ENCODE measurements at regions of chr16 and their contacts with region 1.

Region 1: DNA sequence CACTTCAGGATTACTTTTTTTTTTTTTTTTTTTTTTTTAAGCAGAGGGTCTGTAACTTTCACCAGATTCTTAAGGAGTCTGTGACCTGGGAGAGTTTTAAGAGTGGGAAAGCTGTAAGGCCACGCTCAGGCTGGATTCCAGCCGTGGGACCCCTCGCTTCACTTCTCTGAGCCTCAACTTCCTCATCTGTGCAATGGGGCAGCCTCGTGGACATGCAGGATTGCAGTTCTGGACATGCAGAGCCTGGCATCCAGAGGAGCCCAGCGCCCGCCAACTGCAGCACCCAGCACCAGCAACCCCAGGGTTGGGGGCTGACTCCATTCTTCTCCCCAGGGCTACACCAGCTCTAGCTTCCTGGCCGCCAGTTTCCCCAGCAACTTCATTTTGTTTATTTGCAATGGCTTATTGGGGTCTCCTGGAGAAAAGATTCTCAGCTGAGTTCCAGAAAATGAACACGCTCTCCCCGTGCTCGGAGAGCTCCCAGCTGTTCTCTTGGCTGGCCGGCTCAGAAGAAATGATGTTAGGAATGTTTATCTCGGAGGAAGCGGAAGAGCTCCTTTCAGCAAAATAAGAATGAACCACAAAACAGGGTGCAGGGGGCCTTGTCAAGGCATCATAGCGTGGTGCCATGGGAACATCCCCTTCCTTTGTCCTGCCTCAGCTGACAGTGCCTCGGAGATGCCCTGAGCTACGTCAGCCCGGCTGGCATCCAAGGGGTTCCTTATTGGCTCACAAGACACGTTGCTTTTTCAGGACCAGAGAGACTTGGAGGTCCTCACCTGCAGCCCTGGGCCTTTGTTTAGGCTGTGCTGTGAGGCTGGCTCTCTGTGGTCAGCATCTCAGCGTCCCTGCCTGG is 22.9 kb upstream of the ZCCHC14 start:
- DNase-seq: no peak
- H3K4me3 Mint-ChIP-seq: no peak overlapping the region
- H3K27ac Mint-ChIP-seq: no peak overlapping the region
- H3K4me1 Mint-ChIP-seq: peaks cover 28% of the 10 kb centered on the region
- H3K27me3 Mint-ChIP-seq: no peaks in the 10 kb centered on the region
- CTCF ChIP-seq: no peak

Region 2: DNA sequence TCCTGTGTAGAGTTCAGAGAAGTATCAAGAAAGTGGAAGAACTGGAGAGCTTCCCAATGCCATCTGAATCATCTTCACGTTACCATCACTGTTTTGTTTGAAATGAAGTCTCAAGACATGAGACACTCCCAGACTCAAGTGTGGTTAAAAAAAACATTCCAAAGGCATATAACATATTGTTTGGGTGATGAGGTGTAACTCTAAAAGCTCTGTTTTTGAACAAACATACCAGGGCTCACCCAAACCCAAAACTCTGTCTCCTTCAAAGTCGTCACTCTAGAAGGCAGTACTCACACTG is 16.6 kb before region 1 on chr16:
- CTCF ChIA-PET with region 1: interaction called, 3 read pairs
- POLR2A ChIA-PET with region 1: interaction called, 18 read pairs
- intact Hi-C with region 1: no loop called
- DNase-seq: peak; percentile 67
- H3K4me3 Mint-ChIP-seq: no peak overlapping the region
- H3K27ac Mint-ChIP-seq: peak overlapping the region; percentile 72
- H3K4me1 Mint-ChIP-seq: peaks cover 18% of the 10 kb centered on the region
- H3K27me3 Mint-ChIP-seq: no peaks in the 10 kb centered on the region
- CTCF ChIP-seq: no peak

Region 3: GRCh38 chr16:87601401-87601981 is 85.8 kb after region 1 on chr16:
- CTCF ChIA-PET with region 1: no interaction called
- POLR2A ChIA-PET with region 1: no interaction called
- intact Hi-C with region 1: no loop called
- DNase-seq: no peak
- H3K4me3 Mint-ChIP-seq: no peak overlapping the region
- H3K27ac Mint-ChIP-seq: no peak overlapping the region
- H3K4me1 Mint-ChIP-seq: no peaks in the 10 kb centered on the region
- H3K27me3 Mint-ChIP-seq: peaks cover 39% of the 10 kb centered on the region
- CTCF ChIP-seq: no peak

Region 4: DNA sequence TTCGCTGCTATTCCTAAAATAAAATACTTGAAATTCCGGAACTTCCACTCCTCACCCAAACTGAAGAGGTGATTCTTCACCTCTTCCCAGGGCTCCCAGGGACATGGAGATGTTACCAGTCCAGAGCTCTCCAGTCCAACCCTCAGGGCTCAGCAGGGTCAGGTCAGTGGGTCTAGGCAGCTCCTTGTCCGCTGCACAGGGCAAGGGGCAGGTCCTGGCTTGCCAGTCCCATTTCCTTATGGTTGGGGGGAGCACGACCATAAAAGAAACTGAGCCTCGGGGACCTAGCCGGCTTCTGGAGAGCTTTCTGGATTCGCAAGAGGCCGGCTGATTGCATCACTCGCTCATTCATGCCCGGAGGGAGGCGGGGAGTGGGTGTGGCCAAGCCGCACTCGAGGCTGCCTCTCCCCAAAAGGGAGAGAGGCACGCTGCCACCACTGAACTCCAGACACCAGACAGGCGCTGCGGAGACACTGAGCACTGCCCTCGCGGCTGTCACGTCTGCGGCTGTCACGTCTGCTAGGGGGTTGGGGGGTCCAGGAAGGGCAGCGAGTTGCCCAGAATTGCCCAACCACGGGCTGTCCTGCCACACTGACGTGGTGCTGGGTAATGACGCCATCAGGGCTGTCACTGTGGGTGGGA is 337.8 kb after region 1 on chr16:
- CTCF ChIA-PET with region 1: no interaction called
- POLR2A ChIA-PET with region 1: no interaction called
- intact Hi-C with region 1: no loop called
- DNase-seq: peak; percentile 96
- H3K4me3 Mint-ChIP-seq: peak overlapping the region; percentile 52
- H3K27ac Mint-ChIP-seq: peak overlapping the region; percentile 83
- H3K4me1 Mint-ChIP-seq: peaks cover 36% of the 10 kb centered on the region
- H3K27me3 Mint-ChIP-seq: no peaks in the 10 kb centered on the region
- CTCF ChIP-seq: no peak

Measured in MCF 10A (cell line).